PC-9 (cell line): ENCODE measurements at regions of chr6 and their contacts with region 1.

Region 1: DNA sequence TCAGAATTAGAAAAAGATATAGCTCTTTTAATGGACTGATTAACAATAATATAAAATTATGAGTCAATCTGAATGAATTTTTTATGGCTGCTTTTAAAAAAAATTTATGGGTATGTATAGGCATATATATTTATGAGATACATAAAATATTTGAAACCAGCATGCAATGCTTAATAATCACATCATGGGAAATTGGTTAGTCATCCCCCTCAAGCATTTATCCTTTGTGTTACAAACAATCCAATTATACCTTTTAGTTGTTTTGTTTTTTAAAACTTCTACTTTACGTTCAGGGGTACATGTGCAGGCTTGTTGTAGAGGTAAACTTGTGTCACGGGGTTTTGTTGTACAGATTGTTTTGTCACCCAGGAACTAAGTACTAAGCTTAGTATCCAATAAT is 63.4 kb upstream of the HMGCLL1 start:
- DNase-seq: no peak
- H3K4me3 ChIP-seq: no peak overlapping the region
- H3K27ac ChIP-seq: no peak overlapping the region
- H3K4me1 ChIP-seq: peaks cover 3% of the 10 kb centered on the region
- H3K27me3 ChIP-seq: no peaks in the 10 kb centered on the region
- CTCF ChIP-seq: no peak

Region 2: GRCh38 chr6:55194667-55195066 is 447.7 kb before region 1 on chr6:
- CTCF ChIA-PET with region 1: no interaction called
- POLR2A ChIA-PET with region 1: interaction called, 10 read pairs
- intact Hi-C with region 1: no loop called
- DNase-seq: no peak
- H3K4me3 ChIP-seq: no peak overlapping the region
- H3K27ac ChIP-seq: no peak overlapping the region
- H3K4me1 ChIP-seq: no peaks in the 10 kb centered on the region
- H3K27me3 ChIP-seq: no peaks in the 10 kb centered on the region
- CTCF ChIP-seq: no peak